Panc1 (cell line): ENCODE measurements at regions of chrX and their contacts with region 1.

Region 1: DNA sequence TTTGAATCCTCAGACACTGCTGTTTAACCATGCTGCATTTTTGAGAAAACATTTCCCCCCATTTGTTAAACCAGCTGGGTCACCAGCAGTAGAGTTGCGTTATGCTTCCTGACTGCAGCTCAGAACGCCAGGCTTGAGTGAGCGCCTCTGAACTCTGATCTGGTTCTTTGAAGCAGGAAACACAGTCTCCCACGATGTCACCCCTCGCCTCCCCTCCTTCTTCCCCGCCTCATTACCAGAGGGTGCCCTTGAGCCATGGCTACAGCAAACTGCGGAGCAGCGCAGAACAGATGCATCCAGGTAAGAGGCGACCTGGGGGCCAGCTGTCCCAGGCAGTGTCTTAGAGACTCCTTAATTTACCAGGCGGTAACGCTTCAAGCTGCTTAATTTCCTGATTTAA is 78.4 kb downstream of the REPS2 start:
- DNase-seq: no peak
- ATAC-seq: no peak
- H3K4me3 ChIP-seq: no peak overlapping the region
- H3K27ac ChIP-seq: no peak overlapping the region
- H3K4me1 ChIP-seq: no peaks in the 10 kb centered on the region
- H3K27me3 ChIP-seq: no peaks in the 10 kb centered on the region
- CTCF ChIP-seq: no peak

Region 2: DNA sequence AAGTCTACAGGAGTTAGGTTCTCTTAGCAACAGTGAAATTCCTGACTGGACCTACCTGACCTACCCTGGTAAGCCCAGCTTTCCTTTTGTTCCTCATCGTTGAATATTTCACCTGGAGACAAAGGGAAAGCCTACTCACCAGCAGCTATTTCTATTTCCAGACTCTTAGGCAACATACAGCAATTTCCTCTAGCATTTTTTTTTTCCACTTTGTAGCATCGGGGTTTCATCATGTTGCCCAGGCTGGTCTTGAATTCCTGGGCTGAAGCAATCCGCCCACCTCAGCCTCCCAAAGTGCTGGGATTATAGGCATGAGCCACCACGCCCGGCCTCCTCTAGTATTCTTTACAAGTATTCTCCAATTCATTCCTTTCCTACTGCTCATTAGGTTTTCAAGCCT is 381.7 kb before region 1 on chrX:
- CTCF ChIA-PET with region 1: no interaction called
- POLR2A ChIA-PET with region 1: no interaction called
- in situ Hi-C with region 1: no loop called
- intact Hi-C with region 1: no loop called
- DNase-seq: no peak
- ATAC-seq: no peak
- H3K4me3 ChIP-seq: no peak overlapping the region
- H3K27ac ChIP-seq: no peak overlapping the region
- H3K4me1 ChIP-seq: no peaks in the 10 kb centered on the region
- H3K27me3 ChIP-seq: no peaks in the 10 kb centered on the region
- CTCF ChIP-seq: no peak

Region 3: GRCh38 chrX:16733013-16733412 is 291.9 kb before region 1 on chrX:
- CTCF ChIA-PET with region 1: interaction called, 16 read pairs
- POLR2A ChIA-PET with region 1: no interaction called
- in situ Hi-C with region 1: no loop called
- intact Hi-C with region 1: no loop called
- DNase-seq: no peak
- ATAC-seq: no peak
- H3K4me3 ChIP-seq: no peak overlapping the region
- H3K27ac ChIP-seq: no peak overlapping the region
- H3K4me1 ChIP-seq: no peaks in the 10 kb centered on the region
- H3K27me3 ChIP-seq: no peaks in the 10 kb centered on the region
- CTCF ChIP-seq: no peak

Region 4: DNA sequence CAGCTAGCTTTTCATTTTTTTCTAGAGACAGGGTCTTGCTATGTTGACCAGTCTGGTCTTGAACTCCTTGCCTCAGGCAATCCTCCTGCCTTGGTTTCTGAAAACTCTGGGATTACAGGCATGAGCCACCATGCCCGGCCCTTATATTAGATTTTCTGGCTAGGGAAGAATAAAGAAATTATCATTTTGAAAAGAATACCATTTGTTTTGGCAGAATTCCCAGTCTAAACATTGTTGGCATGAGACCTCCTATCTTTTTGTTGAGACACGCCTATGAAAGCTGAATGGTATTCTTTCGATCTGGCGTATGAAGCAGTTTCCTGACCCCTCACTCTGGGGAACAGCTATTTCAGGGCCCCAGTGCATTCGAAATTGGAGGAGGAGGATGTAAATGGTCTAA is 28.6 kb after region 1 on chrX:
- CTCF ChIA-PET with region 1: no interaction called
- POLR2A ChIA-PET with region 1: no interaction called
- in situ Hi-C with region 1: no loop called
- intact Hi-C with region 1: no loop called
- DNase-seq: no peak
- ATAC-seq: no peak
- H3K4me3 ChIP-seq: no peak overlapping the region
- H3K27ac ChIP-seq: no peak overlapping the region
- H3K4me1 ChIP-seq: no peaks in the 10 kb centered on the region
- H3K27me3 ChIP-seq: no peaks in the 10 kb centered on the region
- CTCF ChIP-seq: no peak